Esophagus muscularis mucosa (tissue), 4 donors: ENCODE measurements at regions of chr3 and their contacts with region 1.

Region 1: DNA sequence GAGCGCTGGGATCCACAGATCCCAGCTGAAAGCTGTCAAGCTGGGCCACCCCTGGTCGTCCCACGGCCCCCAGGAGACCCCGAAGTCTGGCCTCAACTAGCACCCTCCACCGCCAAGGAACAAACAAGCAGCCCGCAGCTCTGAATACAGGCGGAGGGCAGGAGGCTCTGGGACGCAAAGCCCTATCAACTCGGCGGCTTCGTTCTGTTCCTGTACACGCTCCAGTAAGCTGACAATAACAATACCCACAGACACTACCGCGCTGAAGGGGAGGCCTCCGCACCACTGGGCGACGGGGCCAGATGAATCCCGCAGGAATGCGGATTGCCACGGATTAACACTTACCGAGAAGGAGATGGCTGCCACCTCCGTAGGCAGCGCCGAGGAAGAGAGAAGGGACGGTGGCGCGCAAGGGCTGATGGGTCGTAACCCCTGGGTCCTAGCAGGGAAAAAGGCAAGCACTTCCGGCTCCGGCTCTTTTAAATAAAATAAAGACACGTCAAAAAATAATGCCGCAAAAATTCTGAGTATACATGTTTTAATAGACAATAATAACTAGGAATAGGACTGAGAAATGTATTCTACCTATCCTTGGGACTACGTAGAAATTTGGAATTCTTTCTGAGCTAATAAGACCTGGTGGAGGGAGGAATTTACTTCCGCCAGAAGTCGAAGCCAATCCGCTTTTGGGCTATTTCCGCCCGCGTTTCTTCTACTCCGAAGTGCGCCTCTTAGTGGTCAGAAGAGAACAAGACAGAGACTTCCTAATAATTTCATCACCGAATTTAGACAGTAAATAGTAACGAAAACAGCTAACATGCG is at the start of gene RPL32:
- DNase-seq: peak; percentile 98
- H3K4me3 ChIP-seq: peak within 1 kb of the TSS; percentile 74 to 97 (median 86)
- H3K27ac ChIP-seq: peak within 1 kb of the TSS; percentile 86 to 93 (median 90)
- H3K4me1 ChIP-seq: peaks cover 32 to 50% (median 43%) of the 10 kb centered on the region in 4 donors
- H3K27me3 ChIP-seq: peaks cover 0 to 5% (median 0%) of the 10 kb centered on the region in 4 donors
- CTCF ChIP-seq: peak; percentile 85 to 89 (median 86)
- EP300 ChIP-seq: no peak
- POLR2A ChIP-seq: peak; percentile 83
- total RNA-seq, gene RPL32: 784 to 1,554 (median 1,100) TPM

Region 2: DNA sequence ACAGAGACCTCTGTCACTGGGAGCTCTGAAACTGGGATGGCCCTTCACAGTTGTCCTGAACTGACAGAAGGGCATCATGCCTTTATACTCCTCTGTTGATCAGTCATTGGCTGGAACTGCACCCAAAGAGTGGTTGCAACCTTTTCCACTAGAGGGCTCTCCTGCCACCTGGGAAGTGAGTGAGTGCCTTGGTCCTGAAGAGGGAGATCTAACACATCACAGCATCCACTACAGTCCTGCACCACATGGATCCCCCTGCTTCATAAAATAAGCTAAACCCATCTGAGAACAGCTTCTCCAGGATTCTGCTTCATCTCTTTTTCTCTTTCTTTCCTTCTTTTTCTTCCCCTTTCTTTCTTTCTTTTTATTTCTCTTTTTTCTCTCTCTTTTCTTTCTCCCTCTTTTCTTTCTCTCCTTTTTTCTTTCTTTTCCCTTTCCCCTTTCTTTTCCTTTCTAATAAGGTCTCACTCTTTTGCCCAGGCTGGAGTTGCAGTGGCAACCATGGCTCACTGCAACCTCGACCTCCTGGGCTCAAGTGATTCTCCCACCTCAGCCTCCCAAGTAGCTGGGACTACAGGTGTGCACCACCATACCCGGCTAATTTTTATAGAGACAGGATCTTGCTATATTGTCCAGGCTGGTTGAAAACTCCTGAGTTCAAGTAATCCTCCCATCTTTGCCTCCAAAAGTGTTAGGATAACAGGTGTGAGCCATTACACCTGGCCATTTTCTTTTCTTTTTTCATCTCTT is 134.7 kb before region 1 on chr3:
- intact Hi-C with region 1: loop called (anchors 5 kb)
- DNase-seq: no peak
- H3K4me3 ChIP-seq: no peak overlapping the region
- H3K27ac ChIP-seq: no peak overlapping the region
- H3K4me1 ChIP-seq: peaks cover 0 to 3% (median 0%) of the 10 kb centered on the region in 4 donors
- H3K27me3 ChIP-seq: no peaks in the 10 kb centered on the region
- CTCF ChIP-seq: peak; percentile 31 to 77 (median 36)
- EP300 ChIP-seq: no peak
- POLR2A ChIP-seq: no peak

Region 3: DNA sequence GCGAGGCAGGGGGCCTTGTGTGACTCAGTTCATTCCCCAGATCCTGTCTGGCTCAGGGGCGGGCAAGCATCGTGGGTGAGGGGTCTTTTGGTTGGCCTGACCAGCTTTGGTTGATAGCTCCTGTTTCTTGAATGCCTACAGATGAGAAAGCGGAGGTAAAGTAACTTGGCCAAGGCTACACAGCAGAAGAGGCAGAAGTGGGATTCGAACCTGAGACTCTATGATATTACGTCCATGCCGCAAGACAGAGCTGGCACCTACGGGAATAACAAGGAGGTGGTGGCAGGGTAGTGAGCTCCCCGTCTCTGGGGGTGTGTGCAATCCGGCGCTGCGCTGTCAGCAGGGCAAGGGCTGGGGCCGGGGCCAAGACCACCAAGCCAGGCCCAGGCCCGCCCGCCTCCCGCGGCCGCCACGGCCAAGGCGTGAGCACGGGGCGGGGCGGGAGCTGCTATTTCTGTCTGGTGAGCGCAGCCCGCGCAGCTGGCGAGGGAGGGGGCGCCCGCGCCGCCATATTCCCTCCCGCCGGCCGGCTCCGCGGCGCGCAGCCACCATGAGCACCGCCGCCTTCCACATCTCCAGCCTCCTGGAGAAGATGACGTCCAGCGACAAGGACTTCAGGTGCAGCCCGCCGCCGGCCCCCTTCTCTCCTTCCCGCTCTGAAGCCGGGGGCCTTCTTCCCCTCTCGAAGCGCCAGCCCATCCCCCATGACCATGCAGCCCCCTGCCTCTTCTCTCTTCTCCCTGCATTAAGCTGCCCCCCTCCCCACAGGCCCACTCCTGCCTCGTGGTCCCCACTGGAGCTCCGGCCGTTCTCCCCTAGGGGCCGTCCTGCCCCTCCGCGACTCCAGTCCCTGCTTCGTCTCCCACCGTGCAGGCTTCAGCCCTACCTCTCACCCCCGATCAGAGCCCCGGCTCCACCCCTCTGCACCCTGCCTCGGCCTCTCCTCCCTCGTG is 44.9 kb before region 1 on chr3 and contains the start of gene CAND2:
- intact Hi-C with region 1: loop called (anchors 5 kb)
- DNase-seq: no peak
- H3K4me3 ChIP-seq: peak within 1 kb of the TSS; percentile 69 to 75 (median 71)
- H3K27ac ChIP-seq: peak within 1 kb of the TSS; percentile 87 to 94 (median 93)
- H3K4me1 ChIP-seq: peaks cover 12 to 32% (median 25%) of the 10 kb centered on the region in 4 donors
- H3K27me3 ChIP-seq: no peaks in the 10 kb centered on the region
- CTCF ChIP-seq: no peak
- EP300 ChIP-seq: no peak
- POLR2A ChIP-seq: peak; percentile 29
- total RNA-seq, gene CAND2: 10.8 to 26.8 (median 19.6) TPM